PC-9 (cell line): ENCODE measurements at regions of chr10 and their contacts with region 1.

Region 1: DNA sequence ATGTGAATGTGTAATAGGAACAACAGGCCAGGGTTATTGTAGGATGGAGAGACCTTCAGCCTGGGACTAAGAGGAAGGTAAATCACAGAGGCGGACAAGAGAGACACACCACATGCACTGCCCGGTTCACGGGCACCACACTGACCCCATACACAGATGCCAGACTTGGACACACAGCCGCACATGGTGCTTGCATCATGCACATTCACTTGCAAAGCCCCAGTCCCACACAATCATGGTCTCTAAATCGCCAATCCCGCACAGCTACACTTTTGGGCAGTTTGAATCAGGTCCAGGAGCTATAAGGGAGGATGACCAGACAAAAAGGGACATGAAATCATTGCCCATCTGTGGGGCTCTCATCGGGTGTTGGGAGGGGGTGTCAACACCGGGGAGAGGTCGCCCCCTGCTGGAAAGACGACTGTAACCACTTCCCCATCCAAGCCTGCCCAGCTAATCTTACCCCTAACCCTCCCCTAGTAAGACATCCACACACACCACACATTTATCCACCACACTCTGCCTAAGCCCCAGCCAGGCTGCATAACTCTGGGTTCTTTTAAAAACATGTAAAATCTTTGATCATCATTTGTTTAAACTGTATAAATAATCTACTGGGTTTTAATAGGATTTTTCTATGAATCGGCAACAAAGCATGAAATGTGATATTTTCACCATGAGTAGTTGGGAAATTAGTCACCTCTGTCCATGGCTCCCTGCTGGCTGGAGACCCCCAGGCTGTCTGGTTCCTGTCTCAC is 40.5 kb upstream of the SLF2 start:
- DNase-seq: peak in 1 of 2 experiments; percentile 19
- H3K4me3 ChIP-seq: no peak overlapping the region
- H3K27ac ChIP-seq: no peak overlapping the region
- H3K4me1 ChIP-seq: no peaks in the 10 kb centered on the region
- H3K27me3 ChIP-seq: peaks cover 31% of the 10 kb centered on the region
- CTCF ChIP-seq: peak; percentile 54

Region 2: DNA sequence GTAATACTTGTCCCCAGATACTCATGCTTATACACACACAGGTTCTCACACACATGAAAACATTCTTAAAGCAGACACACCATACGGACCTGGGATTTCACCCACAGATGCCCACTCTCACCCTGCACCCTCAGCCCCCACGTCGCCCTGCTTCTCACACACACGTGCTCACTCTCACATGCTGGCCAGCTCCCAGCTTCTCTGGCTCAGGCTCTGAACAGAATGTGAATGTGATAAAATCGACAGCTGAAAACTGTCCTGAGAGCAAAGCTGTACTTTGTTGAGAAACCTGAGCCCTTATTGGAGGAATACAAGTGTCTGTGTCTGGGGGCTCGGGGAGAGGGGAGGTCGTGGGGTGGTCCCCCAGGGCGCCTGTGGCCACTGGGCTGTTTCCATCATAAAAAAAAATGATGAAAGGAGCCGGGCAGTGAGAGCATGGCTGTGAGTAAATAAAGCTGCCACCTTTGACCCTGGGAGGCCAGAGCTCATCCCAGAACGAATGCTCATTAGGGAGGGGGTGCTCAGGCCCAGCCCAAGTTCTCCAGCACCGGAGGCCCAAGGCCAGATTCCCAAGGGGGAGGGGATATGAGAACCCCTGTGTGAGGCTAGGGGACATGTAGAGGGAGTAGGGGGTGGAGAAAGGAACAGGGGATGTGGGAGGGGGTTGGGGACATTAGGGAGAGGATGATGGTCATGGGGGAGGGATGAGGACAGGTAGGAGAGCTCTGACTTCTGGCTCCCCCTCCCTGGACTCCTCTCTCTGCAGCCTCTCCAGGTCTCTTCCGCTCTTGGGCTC is 240.8 kb after region 1 on chr10:
- CTCF ChIA-PET with region 1: interaction called, 20 read pairs
- POLR2A ChIA-PET with region 1: no interaction called
- intact Hi-C with region 1: no loop called
- DNase-seq: no peak
- H3K4me3 ChIP-seq: no peak overlapping the region
- H3K27ac ChIP-seq: no peak overlapping the region
- H3K4me1 ChIP-seq: no peaks in the 10 kb centered on the region
- H3K27me3 ChIP-seq: peaks cover 13% of the 10 kb centered on the region
- CTCF ChIP-seq: no peak